CD4-positive, alpha-beta T cell (primary cell): ENCODE measurements at regions of chr22 and their contacts with region 1.

Region 1: DNA sequence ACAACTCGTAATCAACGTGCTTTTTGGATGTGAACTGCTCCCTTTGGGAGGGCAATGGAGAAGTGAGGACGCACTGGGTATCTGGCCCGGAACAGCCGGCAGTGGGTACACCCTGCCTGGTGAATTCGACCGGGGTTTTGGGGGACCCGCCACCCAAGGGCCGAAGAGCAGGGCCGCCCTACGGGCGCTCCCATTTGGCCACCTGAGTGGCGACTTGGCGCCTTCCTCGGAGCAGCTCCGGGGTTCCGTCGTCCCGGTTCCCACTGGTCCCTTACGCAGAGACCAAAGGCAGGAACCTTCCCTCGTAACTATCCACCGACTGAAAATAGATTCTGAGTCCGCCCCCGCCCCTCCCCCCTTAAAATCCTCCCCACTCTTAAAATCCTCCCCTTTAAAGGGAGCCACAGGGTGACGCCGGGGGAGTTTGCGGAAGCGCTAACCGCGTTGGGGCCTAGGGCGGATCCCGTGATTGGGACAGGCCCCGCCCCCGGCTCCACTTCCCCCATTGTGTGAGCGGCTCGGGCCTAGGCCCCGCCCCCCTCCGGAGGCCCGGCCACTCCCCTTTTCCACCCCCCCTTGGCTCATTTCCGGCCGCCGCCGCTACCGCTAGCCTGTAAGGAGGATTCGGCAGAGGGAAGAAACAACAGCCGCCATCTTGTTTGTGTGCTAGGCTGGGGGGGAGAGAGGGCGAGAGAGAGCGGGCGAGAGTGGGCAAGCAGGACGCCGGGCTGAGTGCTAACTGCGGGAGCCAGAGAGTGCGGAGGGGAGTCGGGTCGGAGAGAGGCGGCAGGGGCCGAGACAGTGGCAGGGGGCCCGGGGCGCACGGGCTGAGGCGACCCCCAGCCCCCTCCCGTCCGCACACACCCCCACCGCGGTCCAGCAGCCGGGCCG is 1.0 kb upstream of the EP300 start:
- DNase-seq: peak; percentile 98 to 100 (median 99)
- ATAC-seq: peak; percentile 85
- H3K4me3 ChIP-seq: peak overlapping the region; percentile 97
- H3K4me3 Mint-ChIP-seq: peak overlapping the region; percentile 99
- H3K27ac ChIP-seq: peak overlapping the region; percentile 97 to 100
- H3K27ac Mint-ChIP-seq: peak overlapping the region; percentile 98
- H3K4me1 ChIP-seq: peaks cover 15% of the 10 kb centered on the region
- H3K4me1 Mint-ChIP-seq: peaks cover 34% of the 10 kb centered on the region
- H3K27me3 ChIP-seq: no peaks in the 10 kb centered on the region
- H3K27me3 Mint-ChIP-seq: no peaks in the 10 kb centered on the region
- CTCF ChIP-seq: no peak

Region 2: GRCh38 chr22:40196628-40197360 is 894.6 kb before region 1 on chr22:
- CTCF ChIA-PET with region 1: no interaction called
- POLR2A ChIA-PET with region 1: no interaction called
- intact Hi-C with region 1: no loop called
- DNase-seq: peak in 1 of 14 experiments; percentile 36
- ATAC-seq: no peak
- H3K4me3 ChIP-seq: no peak overlapping the region
- H3K4me3 Mint-ChIP-seq: no peak overlapping the region
- H3K27ac ChIP-seq: no peak overlapping the region
- H3K27ac Mint-ChIP-seq: peak overlapping the region; percentile 75
- H3K4me1 ChIP-seq: peaks cover 65% of the 10 kb centered on the region
- H3K4me1 Mint-ChIP-seq: peaks cover 81% of the 10 kb centered on the region
- H3K27me3 ChIP-seq: no peaks in the 10 kb centered on the region
- H3K27me3 Mint-ChIP-seq: no peaks in the 10 kb centered on the region
- CTCF ChIP-seq: no peak

Region 3: GRCh38 chr22:40856513-40857308 is 234.7 kb before region 1 on chr22 and contains the starts of genes ST13 and XPNPEP3:
- CTCF ChIA-PET with region 1: no interaction called
- POLR2A ChIA-PET with region 1: interaction called, 10 read pairs
- intact Hi-C with region 1: loop called in 1 of 2 experiments (anchors 5 kb)
- DNase-seq: peak; percentile 94 to 99 (median 96)
- ATAC-seq: peak; percentile 86
- H3K4me3 ChIP-seq: peak within 1 kb of the TSS; percentile 96
- H3K4me3 Mint-ChIP-seq: peak within 1 kb of the TSS; percentile 100
- H3K27ac ChIP-seq: peak within 1 kb of the TSS; percentile 95 to 99
- H3K27ac Mint-ChIP-seq: peak within 1 kb of the TSS; percentile 100
- H3K4me1 ChIP-seq: peaks cover 22% of the 10 kb centered on the region
- H3K4me1 Mint-ChIP-seq: peaks cover 80% of the 10 kb centered on the region
- H3K27me3 ChIP-seq: no peaks in the 10 kb centered on the region
- H3K27me3 Mint-ChIP-seq: no peaks in the 10 kb centered on the region
- CTCF ChIP-seq: peak; percentile 38
- total RNA-seq, gene ST13: 164 to 170 TPM
- total RNA-seq, gene XPNPEP3: 16.3 to 17.9 TPM

Region 4: GRCh38 chr22:41022470-41023298 is 68.7 kb before region 1 on chr22:
- CTCF ChIA-PET with region 1: interaction called, 3 read pairs
- POLR2A ChIA-PET with region 1: interaction called, 64 read pairs
- intact Hi-C with region 1: loop called (anchors 1 to 2 kb)
- DNase-seq: peak; percentile 62 to 89 (median 76)
- ATAC-seq: peak; percentile 79
- H3K4me3 ChIP-seq: peak overlapping the region; percentile 63
- H3K4me3 Mint-ChIP-seq: peak overlapping the region; percentile 86
- H3K27ac ChIP-seq: peak overlapping the region; percentile 64 to 80
- H3K27ac Mint-ChIP-seq: peak overlapping the region; percentile 63
- H3K4me1 ChIP-seq: peaks cover 21% of the 10 kb centered on the region
- H3K4me1 Mint-ChIP-seq: peaks cover 20% of the 10 kb centered on the region
- H3K27me3 ChIP-seq: no peaks in the 10 kb centered on the region
- H3K27me3 Mint-ChIP-seq: no peaks in the 10 kb centered on the region
- CTCF ChIP-seq: no peak

Region 5: DNA sequence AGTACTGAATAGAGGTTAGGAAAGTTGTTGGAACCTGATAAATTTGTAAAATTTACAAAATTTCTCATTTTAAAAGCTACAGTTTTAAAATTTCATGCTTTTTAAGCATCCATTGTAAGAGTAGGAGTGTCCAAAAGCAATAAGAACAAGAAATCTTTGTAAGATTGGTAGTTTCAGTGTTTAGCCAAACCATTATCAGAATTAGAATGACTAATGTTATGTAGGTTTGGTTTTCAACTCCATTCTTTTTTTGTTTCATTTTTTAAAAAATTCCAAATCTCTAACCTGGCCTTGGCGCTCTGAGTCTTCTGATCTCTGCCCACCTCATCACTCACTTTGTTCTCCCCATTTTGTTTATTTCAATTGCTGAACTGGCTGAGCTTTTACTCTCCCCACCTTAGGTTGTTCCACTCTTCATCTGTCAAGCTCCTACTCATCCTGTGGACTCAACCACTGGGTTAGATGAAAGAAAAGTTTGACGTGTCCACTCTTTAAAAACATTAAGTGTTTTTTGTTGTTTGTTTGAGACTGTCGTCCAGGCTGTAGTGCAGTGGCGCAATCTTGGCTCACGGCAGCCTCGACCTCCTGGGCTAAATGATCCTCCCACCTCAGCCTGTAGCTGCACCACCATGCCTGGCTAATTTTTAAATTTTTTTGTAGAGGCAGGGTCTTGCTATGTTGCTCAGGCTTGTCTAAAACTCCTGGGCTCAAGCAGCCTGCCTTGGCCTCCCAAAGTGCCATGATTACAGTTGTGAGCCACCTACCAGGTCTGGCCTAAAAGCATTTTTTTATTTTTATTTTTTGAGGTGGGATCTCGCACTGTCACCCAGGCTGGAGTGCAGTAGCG is 15.0 kb after region 1 on chr22:
- CTCF ChIA-PET with region 1: interaction called, 4 read pairs
- POLR2A ChIA-PET with region 1: interaction called, 16 read pairs
- intact Hi-C with region 1: no loop called
- DNase-seq: no peak
- ATAC-seq: peak; percentile 37
- H3K4me3 ChIP-seq: no peak overlapping the region
- H3K4me3 Mint-ChIP-seq: peak overlapping the region; percentile 31
- H3K27ac ChIP-seq: peak overlapping the region in 1 of 2 donors; percentile 54
- H3K27ac Mint-ChIP-seq: peak overlapping the region; percentile 20
- H3K4me1 ChIP-seq: peaks cover 45% of the 10 kb centered on the region
- H3K4me1 Mint-ChIP-seq: peaks cover 70% of the 10 kb centered on the region
- H3K27me3 ChIP-seq: no peaks in the 10 kb centered on the region
- H3K27me3 Mint-ChIP-seq: no peaks in the 10 kb centered on the region
- CTCF ChIP-seq: no peak

Region 6: GRCh38 chr22:41127451-41127850 is 36.1 kb after region 1 on chr22:
- CTCF ChIA-PET with region 1: no interaction called
- POLR2A ChIA-PET with region 1: interaction called, 4 read pairs
- intact Hi-C with region 1: loop called in 1 of 2 experiments (anchors 5 kb)
- DNase-seq: no peak
- ATAC-seq: no peak
- H3K4me3 ChIP-seq: no peak overlapping the region
- H3K4me3 Mint-ChIP-seq: no peak overlapping the region
- H3K27ac ChIP-seq: no peak overlapping the region
- H3K27ac Mint-ChIP-seq: no peak overlapping the region
- H3K4me1 ChIP-seq: peaks cover 3% of the 10 kb centered on the region
- H3K4me1 Mint-ChIP-seq: peaks cover 15% of the 10 kb centered on the region
- H3K27me3 ChIP-seq: no peaks in the 10 kb centered on the region
- H3K27me3 Mint-ChIP-seq: no peaks in the 10 kb centered on the region
- CTCF ChIP-seq: no peak

Region 7: DNA sequence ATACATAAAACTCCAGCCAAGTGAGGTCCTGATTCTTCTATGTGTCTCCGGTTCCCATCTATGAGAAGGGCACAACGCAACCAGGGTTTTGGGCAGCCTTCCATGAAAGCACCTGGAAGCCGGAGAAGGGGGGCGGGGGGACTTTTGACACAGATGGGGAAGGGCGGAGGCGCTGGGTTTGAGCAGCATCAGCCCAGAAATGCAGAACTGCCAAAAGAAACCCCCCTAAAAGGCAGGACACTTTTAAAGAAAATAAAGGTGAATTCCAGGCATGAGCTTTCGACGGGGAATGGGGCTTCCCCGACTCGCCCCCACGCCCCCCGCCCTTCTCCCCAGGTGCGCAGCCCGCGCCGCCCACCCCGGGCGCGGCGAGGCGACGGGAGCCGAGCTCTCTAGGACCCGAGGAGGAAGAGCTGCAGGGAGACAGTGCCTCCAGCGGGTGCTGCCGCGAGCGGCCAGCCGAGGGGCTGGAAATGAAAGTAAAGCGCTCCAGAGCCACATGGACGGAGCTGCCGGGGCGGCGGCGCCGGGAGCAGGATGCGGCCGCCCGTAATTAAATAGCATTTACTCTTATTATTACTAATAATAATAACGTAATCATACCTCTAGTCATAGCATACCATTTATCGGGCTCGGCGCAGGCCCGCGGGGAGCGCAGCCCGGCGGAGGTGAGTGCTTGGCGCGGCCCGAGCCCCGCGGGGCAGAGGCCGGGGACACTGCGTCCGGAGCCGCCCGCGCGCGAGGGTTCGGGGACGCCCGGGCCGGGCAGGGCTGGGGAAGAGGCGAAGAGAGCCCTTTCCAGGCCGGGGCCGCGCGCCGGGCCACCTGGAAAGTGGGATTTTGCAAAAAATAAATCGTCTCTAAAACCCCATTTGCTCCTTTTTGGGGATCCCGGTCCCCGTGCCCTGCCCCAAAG is 210.0 kb after region 1 on chr22 and contains the start of gene ZC3H7B:
- CTCF ChIA-PET with region 1: interaction called, 3 read pairs
- POLR2A ChIA-PET with region 1: interaction called, 5 read pairs
- intact Hi-C with region 1: loop called in 1 of 2 experiments (anchors 5 kb)
- DNase-seq: peak; percentile 71 to 95 (median 79)
- ATAC-seq: peak; percentile 97
- H3K4me3 ChIP-seq: peak within 1 kb of the TSS; percentile 97
- H3K4me3 Mint-ChIP-seq: peak within 1 kb of the TSS; percentile 84
- H3K27ac ChIP-seq: peak within 1 kb of the TSS; percentile 82 to 83
- H3K27ac Mint-ChIP-seq: peak within 1 kb of the TSS; percentile 92
- H3K4me1 ChIP-seq: peaks cover 30% of the 10 kb centered on the region
- H3K4me1 Mint-ChIP-seq: peaks cover 33% of the 10 kb centered on the region
- H3K27me3 ChIP-seq: no peaks in the 10 kb centered on the region
- H3K27me3 Mint-ChIP-seq: no peaks in the 10 kb centered on the region
- CTCF ChIP-seq: peak; percentile 63
- total RNA-seq, gene ZC3H7B: 29.5 to 32.7 TPM